Right ventricle myocardium superior (tissue), 1 donor: ENCODE measurements at regions of chr21 and their contacts with region 1.

Region 1: GRCh38 chr21:45981151-45982089 is at the start of gene COL6A1:
- DNase-seq: peak; percentile 90
- ATAC-seq: peak; percentile 77
- total RNA-seq, gene COL6A1: 173 TPM

Region 2: GRCh38 chr21:45809421-45809820 is 172.0 kb before region 1 on chr21:
- intact Hi-C with region 1: no loop called
- DNase-seq: no peak
- ATAC-seq: no peak

Region 3: GRCh38 chr21:46056450-46056903 is 75.1 kb after region 1 on chr21:
- intact Hi-C with region 1: loop called (anchors 10 kb)
- DNase-seq: peak; percentile 93
- ATAC-seq: peak; percentile 92